Tibial artery (tissue), 4 donors: ENCODE measurements at regions of chr1 and their contacts with region 1.

Region 1: GRCh38 chr1:117067533-117068370 is 7.6 kb downstream of the TTF2 start:
- DNase-seq: peak in 1 of 2 donors; percentile 41
- H3K4me3 ChIP-seq: no peak overlapping the region
- H3K27ac ChIP-seq: no peak overlapping the region
- H3K4me1 ChIP-seq: no peaks in the 10 kb centered on the region
- H3K27me3 ChIP-seq: no peaks in the 10 kb centered on the region
- CTCF ChIP-seq: peak; percentile 68 to 74

Region 2: GRCh38 chr1:116334015-116334547 is 733.7 kb before region 1 on chr1:
- intact Hi-C with region 1: no loop called
- DNase-seq: no peak
- H3K4me3 ChIP-seq: no peak overlapping the region
- H3K27ac ChIP-seq: no peak overlapping the region
- H3K4me1 ChIP-seq: no peaks in the 10 kb centered on the region
- H3K27me3 ChIP-seq: no peaks in the 10 kb centered on the region
- CTCF ChIP-seq: no peak

Region 3: GRCh38 chr1:116861137-116861536 is 206.6 kb before region 1 on chr1:
- intact Hi-C with region 1: no loop called
- DNase-seq: no peak
- H3K4me3 ChIP-seq: no peak overlapping the region
- H3K27ac ChIP-seq: no peak overlapping the region
- H3K4me1 ChIP-seq: peaks cover 0 to 2% (median under 1%) of the 10 kb centered on the region in 4 donors
- H3K27me3 ChIP-seq: no peaks in the 10 kb centered on the region
- CTCF ChIP-seq: no peak

Region 4: GRCh38 chr1:117017648-117018047 is 50.1 kb before region 1 on chr1:
- intact Hi-C with region 1: no loop called
- DNase-seq: no peak
- H3K4me3 ChIP-seq: no peak overlapping the region
- H3K27ac ChIP-seq: no peak overlapping the region
- H3K4me1 ChIP-seq: no peaks in the 10 kb centered on the region
- H3K27me3 ChIP-seq: no peaks in the 10 kb centered on the region
- CTCF ChIP-seq: no peak

Region 5: GRCh38 chr1:117128323-117129079 is 60.7 kb after region 1 on chr1:
- intact Hi-C with region 1: loop called (anchors 2 kb)
- DNase-seq: no peak
- H3K4me3 ChIP-seq: no peak overlapping the region
- H3K27ac ChIP-seq: no peak overlapping the region
- H3K4me1 ChIP-seq: no peaks in the 10 kb centered on the region
- H3K27me3 ChIP-seq: no peaks in the 10 kb centered on the region
- CTCF ChIP-seq: peak; percentile 50 to 51

Region 6: GRCh38 chr1:117188170-117188815 is 120.5 kb after region 1 on chr1:
- intact Hi-C with region 1: no loop called
- DNase-seq: no peak
- H3K4me3 ChIP-seq: no peak overlapping the region
- H3K27ac ChIP-seq: no peak overlapping the region
- H3K4me1 ChIP-seq: no peaks in the 10 kb centered on the region
- H3K27me3 ChIP-seq: no peaks in the 10 kb centered on the region
- CTCF ChIP-seq: no peak